Common myeloid progenitor, CD34-positive (primary cell): ENCODE measurements at regions of chr11 and their contacts with region 1.

Region 1: DNA sequence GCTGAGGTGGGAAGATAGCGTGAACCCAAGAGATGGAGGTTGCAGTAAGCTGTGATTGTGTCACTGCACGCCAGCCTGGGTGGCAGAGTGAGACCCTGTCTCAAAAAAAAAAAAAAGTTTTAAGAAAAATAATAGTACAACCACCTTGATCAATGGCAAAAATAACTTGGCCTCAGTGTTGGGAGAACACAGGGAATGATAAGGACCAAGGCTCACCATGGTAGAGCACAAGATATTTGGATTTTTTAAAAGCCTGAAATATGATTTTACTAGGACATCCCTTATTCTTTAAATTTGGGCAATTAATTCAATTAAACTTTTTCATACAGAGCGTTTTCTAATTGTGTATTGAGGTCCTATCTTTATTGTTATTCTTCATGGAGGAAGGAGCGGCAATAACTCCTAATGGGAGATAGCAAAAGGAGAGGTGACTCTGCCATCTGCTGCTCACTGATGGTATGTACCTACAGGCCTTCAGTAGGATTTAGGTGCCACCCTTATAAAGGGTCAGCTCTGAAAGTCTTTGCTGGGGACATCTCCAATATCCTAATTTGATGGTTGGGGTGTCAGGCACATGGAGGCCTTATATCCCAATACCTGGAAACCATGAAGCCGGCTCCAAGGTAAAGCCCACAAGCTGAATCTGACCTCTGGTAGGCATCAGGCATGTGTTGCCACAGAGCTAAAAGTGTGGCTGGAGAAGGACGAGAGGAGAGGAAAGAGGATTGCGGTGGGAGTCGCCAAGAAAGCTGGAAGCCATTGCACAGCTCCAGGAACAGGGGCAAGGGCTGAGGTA is 21.9 kb upstream of the POLD3 start:
- DNase-seq: peak; percentile 59 to 70 (median 64)
- H3K4me3 ChIP-seq: no peak overlapping the region
- H3K27ac ChIP-seq: no peak overlapping the region
- H3K4me1 ChIP-seq: no peaks in the 10 kb centered on the region
- H3K27me3 ChIP-seq: peaks cover 0 to 2% (median 0%) of the 10 kb centered on the region in 5 experiments

Region 2: DNA sequence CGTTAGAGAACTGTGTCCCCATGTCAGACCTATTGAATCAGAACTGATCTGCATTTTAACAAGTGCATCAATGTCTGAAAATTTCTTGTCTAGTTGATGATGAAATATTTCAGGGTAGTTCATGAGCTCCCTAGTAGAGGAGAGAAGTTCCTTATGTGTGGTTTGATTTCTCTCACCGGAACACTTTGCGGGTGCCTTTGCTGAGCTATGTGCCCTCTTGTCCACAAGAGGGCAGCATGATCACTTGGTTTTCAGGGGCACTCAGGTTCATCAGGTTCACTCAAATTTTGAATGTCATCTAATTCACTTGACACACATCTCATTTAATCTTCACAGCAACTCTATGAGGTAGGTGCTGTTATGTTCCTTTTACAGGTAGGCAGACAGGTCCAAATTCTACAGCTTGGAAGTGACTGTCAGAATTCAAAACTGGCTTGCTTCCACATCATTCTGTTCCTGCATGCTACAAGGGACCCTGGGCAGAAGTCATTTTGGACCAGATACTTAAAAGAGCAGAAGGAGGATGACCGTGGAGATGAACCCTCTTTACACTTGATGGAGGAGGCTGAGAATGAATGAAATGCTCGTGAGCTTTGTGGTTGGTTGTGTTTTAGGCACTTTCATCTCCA is 314.6 kb before region 1 on chr11:
- CTCF ChIA-PET with region 1: interaction called, 14 read pairs
- POLR2A ChIA-PET with region 1: no interaction called
- DNase-seq: peak; percentile 76 to 89 (median 83)
- H3K4me3 ChIP-seq: no peak overlapping the region
- H3K27ac ChIP-seq: no peak overlapping the region
- H3K4me1 ChIP-seq: no peaks in the 10 kb centered on the region
- H3K27me3 ChIP-seq: no peaks in the 10 kb centered on the region

Region 3: DNA sequence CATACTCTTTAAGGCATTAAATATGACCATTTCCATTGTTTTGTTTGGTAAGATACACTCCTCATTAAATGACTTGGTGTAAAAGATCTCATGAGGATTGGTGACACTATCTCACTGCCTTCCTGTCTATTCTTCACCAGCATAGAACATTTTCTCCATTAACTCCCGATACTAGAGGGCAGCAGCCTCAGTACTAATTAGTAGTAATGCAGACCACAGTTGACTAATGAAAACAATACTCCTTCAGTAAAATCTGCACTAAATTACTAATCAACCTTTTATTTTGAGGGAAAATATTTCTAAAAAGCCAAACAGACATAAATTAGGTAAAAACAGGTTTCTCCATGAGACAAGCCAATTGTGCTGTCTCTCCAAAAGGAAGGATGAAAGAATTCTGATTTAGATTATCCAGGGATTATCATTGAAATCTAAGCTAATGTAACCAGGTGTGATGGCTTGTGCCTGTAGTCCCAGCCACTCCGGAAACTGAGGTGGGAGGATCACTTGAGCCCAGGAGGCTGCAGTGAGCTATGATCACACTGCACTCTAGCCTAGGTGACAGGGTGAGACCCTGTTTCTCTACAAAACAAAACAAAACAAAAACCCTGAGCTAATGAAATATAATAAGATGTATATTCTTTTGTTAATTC is 181.7 kb before region 1 on chr11:
- CTCF ChIA-PET with region 1: interaction called, 13 read pairs
- POLR2A ChIA-PET with region 1: no interaction called
- DNase-seq: peak; percentile 60 to 81 (median 62)
- H3K4me3 ChIP-seq: no peak overlapping the region
- H3K27ac ChIP-seq: no peak overlapping the region
- H3K4me1 ChIP-seq: peaks cover 0 to 4% (median 2%) of the 10 kb centered on the region in 4 experiments
- H3K27me3 ChIP-seq: no peaks in the 10 kb centered on the region